ENCODE measurements at regions of chr10 and their contacts with region 1.

Region 1: GRCh38 chr10:110843031-110843430 is 28.7 kb upstream of the PDCD4 start:
- DNase-seq: peak; percentile 70
- H3K4me3 Mint-ChIP-seq: no peak overlapping the region
- H3K27ac Mint-ChIP-seq: peak overlapping the region; percentile 24
- H3K4me1 Mint-ChIP-seq: peaks cover 25% of the 10 kb centered on the region
- H3K27me3 Mint-ChIP-seq: no peaks in the 10 kb centered on the region

Region 2: GRCh38 chr10:110376021-110376766 is 466.8 kb before region 1 on chr10:
- CTCF ChIA-PET with region 1: no interaction called
- POLR2A ChIA-PET with region 1: no interaction called
- intact Hi-C with region 1: no loop called
- DNase-seq: no peak
- H3K4me3 Mint-ChIP-seq: no peak overlapping the region
- H3K27ac Mint-ChIP-seq: no peak overlapping the region
- H3K4me1 Mint-ChIP-seq: peaks cover 25% of the 10 kb centered on the region
- H3K27me3 Mint-ChIP-seq: no peaks in the 10 kb centered on the region

Region 3: GRCh38 chr10:110783509-110784107 is 59.4 kb before region 1 on chr10:
- CTCF ChIA-PET with region 1: no interaction called
- POLR2A ChIA-PET with region 1: no interaction called
- intact Hi-C with region 1: loop called (anchors 2 kb)
- DNase-seq: peak; percentile 87
- H3K4me3 Mint-ChIP-seq: no peak overlapping the region
- H3K27ac Mint-ChIP-seq: peak overlapping the region; percentile 64
- H3K4me1 Mint-ChIP-seq: peaks cover 31% of the 10 kb centered on the region
- H3K27me3 Mint-ChIP-seq: no peaks in the 10 kb centered on the region

Region 4: DNA sequence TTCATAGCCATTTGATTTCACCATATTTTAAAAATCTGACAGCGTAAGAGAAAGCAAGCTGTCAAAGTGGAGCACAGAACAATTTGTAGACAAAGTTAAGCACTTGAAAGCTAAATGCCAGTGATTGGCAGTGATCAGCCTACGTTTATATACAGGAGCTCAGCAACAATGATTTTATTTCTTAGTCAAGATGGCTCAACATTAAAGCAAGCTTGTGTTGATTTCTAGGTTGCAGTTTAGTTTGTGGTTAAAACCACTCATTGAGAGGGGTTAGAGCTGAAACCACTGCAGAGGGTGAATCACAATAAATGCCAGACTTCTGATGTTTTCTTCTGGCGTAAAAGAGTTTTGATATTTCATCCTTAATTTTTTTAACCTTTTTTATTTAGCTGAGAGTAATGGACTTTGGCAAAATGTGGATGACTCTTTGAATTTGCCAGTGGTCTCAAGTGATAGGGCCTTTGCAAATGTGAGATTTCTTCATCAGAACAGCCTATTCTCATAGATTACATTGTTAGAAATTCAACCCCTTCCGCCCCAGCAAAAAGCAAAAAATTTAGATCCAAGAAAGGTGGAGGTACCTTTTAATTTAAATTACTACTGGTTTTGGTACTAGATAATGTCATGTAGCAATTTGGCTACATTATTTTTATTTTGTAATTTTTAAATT is 150.1 kb after region 1 on chr10:
- CTCF ChIA-PET with region 1: no interaction called
- POLR2A ChIA-PET with region 1: no interaction called
- intact Hi-C with region 1: no loop called
- DNase-seq: no peak
- H3K4me3 Mint-ChIP-seq: no peak overlapping the region
- H3K27ac Mint-ChIP-seq: no peak overlapping the region
- H3K4me1 Mint-ChIP-seq: peaks cover 28% of the 10 kb centered on the region
- H3K27me3 Mint-ChIP-seq: no peaks in the 10 kb centered on the region

Region 5: DNA sequence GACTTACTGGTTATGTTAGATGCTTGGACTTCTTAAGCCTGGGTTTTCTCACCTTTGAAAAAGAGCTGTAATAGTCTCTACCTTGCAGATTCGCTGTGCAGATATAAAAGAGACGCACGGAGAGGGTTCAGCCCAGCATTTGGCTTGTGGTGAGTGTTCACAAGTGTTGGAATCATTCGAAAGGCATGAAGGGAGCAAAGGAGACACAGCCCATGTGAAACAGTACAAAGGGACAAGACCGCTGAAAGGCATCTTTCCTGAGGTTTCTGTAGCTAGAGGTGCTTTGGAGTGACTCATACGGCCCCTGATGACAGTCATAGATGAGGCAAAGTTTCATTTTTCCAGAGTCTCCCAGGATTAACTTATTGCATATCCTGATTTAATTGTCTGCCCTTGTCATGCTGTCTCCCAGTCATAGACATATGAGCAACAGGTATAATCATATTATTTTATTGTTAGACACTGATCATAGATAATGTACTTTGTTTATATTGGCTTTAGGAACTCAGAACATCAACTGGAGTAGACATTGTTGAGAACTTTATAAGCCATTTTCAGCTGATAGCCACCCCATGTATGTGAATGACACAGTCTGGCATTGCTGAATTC is 404.9 kb after region 1 on chr10:
- CTCF ChIA-PET with region 1: no interaction called
- POLR2A ChIA-PET with region 1: no interaction called
- intact Hi-C with region 1: no loop called
- DNase-seq: no peak
- H3K4me3 Mint-ChIP-seq: no peak overlapping the region
- H3K27ac Mint-ChIP-seq: no peak overlapping the region
- H3K4me1 Mint-ChIP-seq: no peaks in the 10 kb centered on the region
- H3K27me3 Mint-ChIP-seq: peaks cover 23% of the 10 kb centered on the region

Measured in activated CD4-positive, alpha-beta memory T cell treated with anti-CD3 and anti-CD28 coated beads for 36 hours (primary cell).